Prostate gland (tissue), 2 donors: ENCODE measurements at regions of chr17 and their contacts with region 1.

Region 1: GRCh38 chr17:82030470-82031302 is 792 bp upstream of the RAC3 start:
- DNase-seq: peak; percentile 83
- H3K4me3 ChIP-seq: peak overlapping the region; percentile 40 to 47
- H3K27ac ChIP-seq: peak overlapping the region; percentile 87 to 88
- H3K4me1 ChIP-seq: peaks cover 15% of the 10 kb centered on the region
- H3K27me3 ChIP-seq: no peaks in the 10 kb centered on the region
- CTCF ChIP-seq: peak; percentile 88 to 99 (median 95)
- POLR2A ChIP-seq: peak; percentile 11

Region 2: GRCh38 chr17:81794509-81794908 is 236.2 kb before region 1 on chr17:
- intact Hi-C with region 1: no loop called
- DNase-seq: no peak
- H3K4me3 ChIP-seq: no peak overlapping the region
- H3K27ac ChIP-seq: no peak overlapping the region
- H3K4me1 ChIP-seq: no peaks in the 10 kb centered on the region
- H3K27me3 ChIP-seq: no peaks in the 10 kb centered on the region
- CTCF ChIP-seq: no peak
- POLR2A ChIP-seq: no peak

Region 3: DNA sequence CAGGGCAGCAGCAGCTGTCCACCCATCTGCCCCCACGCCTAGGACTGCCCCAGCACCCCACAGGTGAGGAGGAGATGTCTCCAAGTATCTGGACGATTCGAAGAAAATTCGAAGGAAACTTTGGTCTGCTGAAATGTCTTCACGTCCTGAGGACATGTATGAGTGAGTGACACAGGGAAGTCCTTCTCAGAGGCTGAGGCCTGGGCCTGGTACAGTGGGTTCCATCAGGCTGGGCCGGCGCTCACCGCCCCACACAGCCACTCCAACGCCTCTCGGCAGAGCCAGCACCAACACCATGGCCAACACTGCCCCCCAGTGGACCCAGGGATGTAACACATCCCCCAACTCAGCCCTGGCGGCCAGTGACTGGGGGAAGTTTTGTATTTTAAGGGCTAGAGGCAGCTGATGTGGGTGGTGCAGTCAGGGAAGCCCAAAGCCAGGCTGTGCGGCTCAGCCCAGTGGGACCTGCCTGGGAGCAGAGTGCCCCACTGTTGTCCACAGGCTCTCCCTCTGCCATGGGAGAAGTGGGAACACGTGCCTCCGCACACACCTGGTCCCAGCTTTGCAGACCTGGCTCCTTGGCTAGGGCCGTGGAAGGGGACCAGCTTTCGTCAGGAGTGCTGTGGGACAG is 123.2 kb after region 1 on chr17:
- intact Hi-C with region 1: loop called (anchors 2 kb)
- DNase-seq: peak; percentile 83
- H3K4me3 ChIP-seq: no peak overlapping the region
- H3K27ac ChIP-seq: peak overlapping the region; percentile 94 to 96
- H3K4me1 ChIP-seq: peaks cover 24% of the 10 kb centered on the region
- H3K27me3 ChIP-seq: no peaks in the 10 kb centered on the region
- CTCF ChIP-seq: peak; percentile 95 to 99 (median 97)
- POLR2A ChIP-seq: no peak